Esophagus muscularis mucosa (tissue), 4 donors: ENCODE measurements at regions of chr13 and their contacts with region 1.

Region 1: DNA sequence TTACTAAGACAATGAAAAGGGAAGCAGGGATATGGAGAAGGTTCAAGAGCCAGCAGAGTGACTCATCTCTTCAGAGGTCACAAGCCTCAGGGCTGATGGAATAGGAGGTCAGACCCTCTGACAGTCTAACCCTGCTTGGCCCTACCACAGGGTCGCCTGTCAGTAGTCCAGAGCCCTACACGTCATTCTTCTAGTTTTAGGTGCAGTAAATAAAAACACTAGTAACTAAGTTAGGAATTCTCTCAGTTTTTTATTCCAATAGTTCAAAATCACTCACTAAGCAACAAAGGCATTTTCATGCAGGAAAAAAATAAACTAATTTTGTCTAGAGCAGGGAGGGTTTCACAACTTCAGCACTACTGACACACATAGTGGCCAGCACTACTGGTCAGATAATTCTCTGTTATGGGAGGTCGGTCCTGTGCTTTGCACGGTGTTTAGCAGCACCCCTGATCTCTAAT is 27.2 kb downstream of the FOXO1 start:
- DNase-seq: no peak
- H3K4me3 ChIP-seq: no peak overlapping the region
- H3K27ac ChIP-seq: peak overlapping the region; percentile 34 to 59 (median 40)
- H3K4me1 ChIP-seq: peaks cover 72 to 94% (median 82%) of the 10 kb centered on the region in 4 donors
- H3K27me3 ChIP-seq: no peaks in the 10 kb centered on the region
- CTCF ChIP-seq: no peak
- EP300 ChIP-seq: no peak
- POLR2A ChIP-seq: no peak

Region 2: DNA sequence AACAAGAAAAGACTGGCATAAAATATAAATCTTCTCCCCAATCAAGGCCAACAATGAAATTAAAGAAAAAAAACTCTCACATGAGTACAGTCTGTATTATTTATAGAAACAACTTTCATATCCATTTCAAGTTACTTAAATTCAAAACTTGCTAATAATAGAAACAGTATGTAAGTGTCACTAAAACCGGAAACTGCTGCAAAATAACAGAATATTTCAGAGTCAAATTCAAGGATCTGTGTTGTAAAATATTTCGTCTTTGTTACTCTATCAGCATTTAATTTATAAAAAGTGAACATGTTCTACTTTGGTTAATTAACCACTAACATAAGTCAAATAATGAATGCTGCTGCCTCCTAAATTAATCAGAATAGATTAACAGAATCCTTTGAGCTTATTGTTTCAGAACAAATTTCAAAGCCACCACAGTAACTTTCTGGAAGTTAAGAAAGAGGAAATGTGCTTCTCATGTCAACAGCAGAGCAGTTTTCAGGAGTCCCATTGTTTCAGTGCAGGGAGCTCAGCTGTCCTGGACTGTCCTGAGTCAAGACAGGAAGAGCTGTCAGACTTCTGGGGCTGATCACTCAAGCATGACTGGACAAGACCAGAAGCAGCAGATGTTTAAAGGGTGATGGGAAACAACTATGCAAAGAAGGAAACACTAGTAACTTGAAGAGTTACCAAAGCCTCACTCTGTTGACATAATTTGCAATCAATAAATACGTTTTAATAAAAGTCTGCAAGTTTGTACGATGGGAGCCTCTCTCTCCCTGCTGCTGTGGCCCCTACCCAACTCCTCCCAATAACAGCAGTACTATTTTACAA is 49.8 kb before region 1 on chr13:
- intact Hi-C with region 1: no loop called
- DNase-seq: peak; percentile 75
- H3K4me3 ChIP-seq: no peak overlapping the region
- H3K27ac ChIP-seq: peak overlapping the region; percentile 10 to 65 (median 12)
- H3K4me1 ChIP-seq: peaks cover 75 to 94% (median 91%) of the 10 kb centered on the region in 4 donors
- H3K27me3 ChIP-seq: no peaks in the 10 kb centered on the region
- CTCF ChIP-seq: no peak
- EP300 ChIP-seq: no peak
- POLR2A ChIP-seq: no peak

Region 3: DNA sequence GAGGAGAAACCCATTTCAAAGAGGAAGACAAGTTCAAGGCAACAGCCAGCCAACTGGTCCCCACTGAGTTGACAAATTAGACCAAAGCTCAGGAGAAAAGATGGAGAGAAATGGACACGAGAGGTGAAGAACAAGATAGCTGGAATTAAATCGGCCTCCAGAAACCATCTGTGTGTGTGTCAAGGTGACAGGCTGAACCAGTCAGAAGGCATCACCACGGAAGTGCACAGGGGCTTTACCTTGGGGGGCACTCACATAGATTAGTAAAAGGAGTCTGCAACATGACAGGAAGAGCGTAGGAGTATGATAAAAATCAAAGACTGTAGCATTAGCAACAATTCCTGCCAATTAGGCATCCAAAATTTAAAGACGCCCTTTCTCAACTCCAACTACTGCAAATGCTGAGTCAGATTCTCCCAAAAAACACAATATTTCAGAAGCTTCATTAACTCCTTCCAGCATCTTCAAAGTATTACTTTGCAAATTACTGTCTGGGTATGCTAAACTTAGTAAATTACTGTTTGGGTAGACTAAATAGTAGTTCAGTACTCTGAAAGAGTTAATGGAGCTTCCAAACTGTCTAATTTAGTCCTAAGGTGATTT is 39.0 kb before region 1 on chr13:
- intact Hi-C with region 1: loop called (anchors 5 kb)
- DNase-seq: peak; percentile 29
- H3K4me3 ChIP-seq: no peak overlapping the region
- H3K27ac ChIP-seq: peak overlapping the region in 1 of 4 donors; percentile 63
- H3K4me1 ChIP-seq: peaks cover 49 to 84% (median 82%) of the 10 kb centered on the region in 4 donors
- H3K27me3 ChIP-seq: no peaks in the 10 kb centered on the region
- CTCF ChIP-seq: no peak
- EP300 ChIP-seq: no peak
- POLR2A ChIP-seq: no peak